Gastrocnemius medialis (tissue), 4 donors: ENCODE measurements at regions of chr3 and their contacts with region 1.

Region 1: DNA sequence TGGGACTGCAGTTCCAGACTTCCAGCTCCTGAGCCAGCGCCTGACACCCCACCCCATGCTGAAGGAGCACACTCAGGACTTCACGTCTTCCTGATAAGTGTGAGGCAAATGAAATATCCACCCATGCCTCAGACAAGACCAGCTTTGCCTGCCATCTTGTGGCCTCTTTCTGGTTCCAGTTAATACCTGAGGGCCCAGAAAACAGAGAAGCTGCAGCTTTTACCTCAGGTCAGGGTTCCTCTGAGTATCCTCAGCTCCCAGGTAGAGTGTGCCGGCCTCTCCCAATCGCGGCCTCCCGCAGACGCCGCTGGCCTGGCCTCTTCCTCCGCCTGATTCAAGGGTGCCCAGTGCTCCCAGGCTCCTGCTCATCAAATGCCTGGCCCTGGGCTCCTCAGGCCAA is 5.1 kb upstream of the KLHL6 start:
- DNase-seq: no peak
- ATAC-seq: peak; percentile 27 to 44
- H3K4me3 ChIP-seq: no peak overlapping the region
- H3K27ac ChIP-seq: peak overlapping the region in 1 of 4 donors; percentile 40
- H3K4me1 ChIP-seq: peaks cover 6 to 9% of the 10 kb centered on the region in 2 donors
- H3K27me3 ChIP-seq: no peaks in the 10 kb centered on the region
- CTCF ChIP-seq: peak in 3 of 5 experiments; percentile 26 to 46 (median 36)
- POLR2A ChIP-seq: no peak

Region 2: GRCh38 chr3:183468424-183468823 is 92.2 kb before region 1 on chr3:
- in situ Hi-C with region 1: no loop called
- intact Hi-C with region 1: loop called (anchors 1 kb)
- DNase-seq: no peak
- ATAC-seq: no peak
- H3K4me3 ChIP-seq: no peak overlapping the region
- H3K27ac ChIP-seq: no peak overlapping the region
- H3K4me1 ChIP-seq: peaks cover 0 to 9% of the 10 kb centered on the region in 2 donors
- H3K27me3 ChIP-seq: no peaks in the 10 kb centered on the region
- CTCF ChIP-seq: no peak
- POLR2A ChIP-seq: no peak

Region 3: DNA sequence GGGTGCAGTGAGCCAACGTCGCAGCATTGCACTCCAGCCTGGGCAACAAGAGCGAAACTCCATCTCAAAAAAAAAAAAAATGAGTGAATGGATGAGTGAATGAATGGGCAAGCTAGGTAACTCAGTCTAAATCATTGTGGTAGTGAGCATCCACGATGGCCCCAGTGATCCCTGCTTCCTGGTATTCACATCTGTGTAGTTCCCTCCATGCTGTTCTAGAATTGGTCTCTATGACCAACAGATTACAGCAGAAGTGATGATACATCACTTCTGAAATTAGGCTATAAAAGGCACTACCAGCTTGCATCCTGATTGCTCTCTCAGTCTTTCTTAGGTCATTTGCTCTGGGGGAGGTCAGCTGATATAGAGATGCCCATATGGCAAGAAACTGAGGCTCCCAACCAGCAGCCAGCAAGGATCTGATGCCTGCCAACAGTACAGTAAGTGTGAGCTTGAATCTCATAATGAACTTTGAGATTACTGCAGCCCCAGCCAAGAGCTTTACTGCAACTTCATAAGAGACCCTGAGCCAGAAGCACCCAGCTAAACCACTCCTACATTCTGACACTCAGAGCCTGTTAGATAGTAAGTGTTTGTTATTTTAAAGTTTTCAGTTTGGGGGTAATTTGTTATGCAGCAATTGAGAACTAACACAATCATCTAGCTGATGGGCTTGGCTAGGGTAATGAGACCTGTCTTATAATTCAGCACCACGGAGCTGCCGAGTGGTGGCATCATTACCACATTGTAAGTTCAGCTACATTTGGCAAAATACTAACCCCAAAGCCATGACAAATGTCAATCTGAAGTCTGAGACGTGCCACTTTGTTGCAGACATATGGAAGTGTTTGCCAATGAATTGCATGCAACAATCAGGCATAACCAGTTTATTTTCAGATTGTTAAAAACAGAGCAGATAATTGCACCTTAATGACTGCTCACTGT is 58.1 kb before region 1 on chr3:
- in situ Hi-C with region 1: no loop called
- intact Hi-C with region 1: loop called (anchors 1 kb)
- DNase-seq: peak; percentile 16 to 41
- ATAC-seq: peak; percentile 74 to 88
- H3K4me3 ChIP-seq: no peak overlapping the region
- H3K27ac ChIP-seq: no peak overlapping the region
- H3K4me1 ChIP-seq: peaks cover 4 to 20% of the 10 kb centered on the region in 2 donors
- H3K27me3 ChIP-seq: no peaks in the 10 kb centered on the region
- CTCF ChIP-seq: peak in 4 of 5 experiments; percentile 13 to 55 (median 32)
- POLR2A ChIP-seq: no peak

Region 4: DNA sequence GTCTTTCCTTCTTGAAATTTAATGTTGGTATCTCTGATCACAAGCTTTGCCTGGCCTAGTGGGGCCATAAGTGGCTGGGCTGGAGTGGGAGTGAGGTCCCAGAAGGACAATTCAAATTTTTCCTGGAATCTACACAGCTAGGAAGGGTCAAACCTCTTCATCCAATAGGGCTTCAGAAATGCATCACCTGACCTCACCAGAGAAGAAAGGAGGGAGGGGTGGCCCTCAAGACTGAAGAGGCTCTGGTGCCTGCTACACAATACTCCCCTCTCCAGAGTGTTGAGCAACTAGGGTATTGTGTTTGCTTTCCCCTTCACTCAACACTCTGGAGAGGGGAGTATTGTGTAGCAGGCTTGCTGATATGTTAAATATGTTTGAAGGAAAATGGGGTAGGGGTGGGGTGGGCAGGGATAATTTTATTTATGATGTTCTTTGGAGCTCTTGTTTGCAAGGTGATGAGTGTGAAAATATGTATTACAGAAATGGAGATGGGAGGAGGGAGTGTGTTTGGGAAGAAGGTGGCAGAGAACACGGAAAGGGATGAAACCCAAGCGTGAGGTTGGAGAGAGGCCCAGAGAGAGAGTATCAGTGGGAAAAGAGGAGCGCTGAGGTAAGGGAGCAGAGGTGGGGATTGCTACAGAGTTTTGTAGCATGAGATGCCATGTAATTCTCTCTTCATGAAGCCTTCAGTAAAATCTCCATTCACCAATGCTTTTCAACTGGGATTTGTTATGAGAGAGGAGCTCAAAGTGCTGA is 69.1 kb after region 1 on chr3:
- in situ Hi-C with region 1: no loop called
- intact Hi-C with region 1: loop called (anchors 5 kb)
- DNase-seq: peak in 1 of 2 donors; percentile 37
- ATAC-seq: peak in 1 of 2 donors; percentile 55
- H3K4me3 ChIP-seq: no peak overlapping the region
- H3K27ac ChIP-seq: peak overlapping the region; percentile 50 to 82 (median 74)
- H3K4me1 ChIP-seq: peaks cover 34 to 45% of the 10 kb centered on the region in 2 donors
- H3K27me3 ChIP-seq: no peaks in the 10 kb centered on the region
- CTCF ChIP-seq: no peak
- POLR2A ChIP-seq: no peak

Region 5: DNA sequence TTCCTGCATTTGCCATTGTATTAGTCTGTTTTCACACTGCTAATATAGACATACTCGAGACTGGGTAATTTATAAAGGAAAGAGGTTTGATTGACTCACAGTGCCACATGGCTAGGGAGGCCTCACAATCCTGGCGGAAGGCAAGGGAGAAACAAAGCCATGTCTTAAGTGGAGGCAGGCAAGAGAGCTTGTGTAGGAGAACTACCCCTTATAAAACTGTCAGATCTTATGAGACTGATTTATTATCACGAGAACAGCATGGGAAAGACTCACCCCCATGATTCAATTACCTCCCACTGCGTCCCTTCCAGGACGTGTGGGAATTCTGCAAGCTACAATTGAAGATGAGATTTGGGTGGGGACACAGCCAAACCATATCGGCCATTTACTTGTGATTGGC is 164.8 kb after region 1 on chr3:
- in situ Hi-C with region 1: no loop called
- intact Hi-C with region 1: no loop called
- DNase-seq: no peak
- ATAC-seq: no peak
- H3K4me3 ChIP-seq: no peak overlapping the region
- H3K27ac ChIP-seq: no peak overlapping the region
- H3K4me1 ChIP-seq: no peaks in the 10 kb centered on the region
- H3K27me3 ChIP-seq: no peaks in the 10 kb centered on the region
- CTCF ChIP-seq: no peak
- POLR2A ChIP-seq: no peak